Activated CD8-positive, alpha-beta T cell treated with anti-CD3 and anti-CD28 coated beads, Interleukin-2, amount 10 ng/mL, durations not matched to agents 7 days and 5 days (primary cell): ENCODE measurements at regions of chr13 and their contacts with region 1.

Region 1: GRCh38 chr13:44435142-44435982 is 61.7 kb downstream of the SERP2 start:
- DNase-seq: peak; percentile 92
- ATAC-seq: peak; percentile 88
- H3K4me3 Mint-ChIP-seq: peak overlapping the region; percentile 78
- H3K27ac Mint-ChIP-seq: peak overlapping the region; percentile 58
- H3K4me1 Mint-ChIP-seq: peaks cover 28% of the 10 kb centered on the region
- H3K27me3 Mint-ChIP-seq: peaks cover 21% of the 10 kb centered on the region

Region 2: GRCh38 chr13:43905435-43906031 is 529.8 kb before region 1 on chr13:
- CTCF ChIA-PET with region 1: interaction called, 62 read pairs
- POLR2A ChIA-PET with region 1: no interaction called
- DNase-seq: peak; percentile 48
- ATAC-seq: peak; percentile 73
- H3K4me3 Mint-ChIP-seq: no peak overlapping the region
- H3K27ac Mint-ChIP-seq: no peak overlapping the region
- H3K4me1 Mint-ChIP-seq: no peaks in the 10 kb centered on the region
- H3K27me3 Mint-ChIP-seq: peaks cover 24% of the 10 kb centered on the region

Region 3: DNA sequence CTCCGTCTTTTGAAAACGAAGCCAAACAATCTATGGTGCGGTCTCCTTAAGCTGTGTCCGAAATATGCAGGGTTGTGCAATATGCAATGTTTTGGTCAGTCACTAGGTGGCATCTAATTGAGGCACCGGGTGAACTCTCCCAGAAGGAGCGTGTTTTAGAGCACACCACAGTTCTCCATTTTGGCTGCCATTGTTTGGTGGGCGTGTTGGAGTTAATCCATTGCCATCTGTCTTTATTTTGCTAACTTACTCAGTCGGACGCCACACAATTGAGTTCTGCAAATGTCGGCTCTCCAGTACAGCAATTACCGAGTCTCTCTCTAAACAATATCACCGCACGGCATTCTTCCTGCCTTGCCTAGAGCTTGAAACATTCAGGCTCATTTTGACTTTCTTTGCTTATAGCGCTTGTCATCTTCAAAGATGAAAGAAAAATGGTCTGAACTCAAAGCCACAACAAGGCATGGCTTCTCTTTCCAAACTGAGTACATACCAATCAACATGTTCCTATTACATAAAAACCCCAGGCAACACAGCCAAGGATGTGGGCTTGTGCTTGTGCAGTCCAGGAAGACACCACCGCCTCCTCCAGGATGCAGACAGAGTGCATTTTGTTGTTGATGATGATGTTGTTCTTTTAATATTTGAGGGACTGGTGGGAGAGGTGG is 243.7 kb before region 1 on chr13:
- CTCF ChIA-PET with region 1: interaction called, 21 read pairs
- POLR2A ChIA-PET with region 1: interaction called, 3 read pairs
- DNase-seq: peak; percentile 44
- ATAC-seq: peak; percentile 74
- H3K4me3 Mint-ChIP-seq: no peak overlapping the region
- H3K27ac Mint-ChIP-seq: peak overlapping the region; percentile 23
- H3K4me1 Mint-ChIP-seq: peaks cover 30% of the 10 kb centered on the region
- H3K27me3 Mint-ChIP-seq: peaks cover 33% of the 10 kb centered on the region